ENCODE measurements at regions of chr3 and their contacts with region 1.

Region 1: GRCh38 chr3:187679638-187680396 is 9.6 kb upstream of the SST start:
- DNase-seq: peak; percentile 73
- ATAC-seq: peak; percentile 80
- H3K4me3 Mint-ChIP-seq: no peak overlapping the region
- H3K27ac Mint-ChIP-seq: no peak overlapping the region
- H3K4me1 Mint-ChIP-seq: peaks cover 2% of the 10 kb centered on the region
- H3K27me3 Mint-ChIP-seq: peaks cover 24% of the 10 kb centered on the region

Region 2: DNA sequence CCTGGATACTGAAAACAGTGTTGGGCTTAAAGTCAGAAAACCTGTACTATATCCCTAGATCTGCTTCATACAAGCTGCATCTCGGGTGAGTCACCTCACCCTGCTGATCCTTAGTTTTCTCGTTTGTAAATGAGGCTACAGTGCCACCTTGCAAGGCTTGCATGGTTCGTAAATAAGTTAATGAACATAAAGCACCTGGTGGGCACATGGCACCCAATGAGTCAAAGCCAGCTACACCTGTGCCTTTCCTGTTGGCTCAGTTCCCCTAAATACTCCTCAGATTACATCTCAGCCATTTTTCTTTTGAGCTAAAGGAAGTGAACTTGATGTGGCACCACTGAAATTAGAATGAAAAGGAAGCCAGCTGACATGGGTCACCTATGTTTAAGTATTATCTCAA is 456.0 kb before region 1 on chr3:
- CTCF ChIA-PET with region 1: interaction called, 22 read pairs
- POLR2A ChIA-PET with region 1: no interaction called
- DNase-seq: no peak
- ATAC-seq: no peak
- H3K4me3 Mint-ChIP-seq: no peak overlapping the region
- H3K27ac Mint-ChIP-seq: no peak overlapping the region
- H3K4me1 Mint-ChIP-seq: no peaks in the 10 kb centered on the region
- H3K27me3 Mint-ChIP-seq: peaks cover 6% of the 10 kb centered on the region

Region 3: DNA sequence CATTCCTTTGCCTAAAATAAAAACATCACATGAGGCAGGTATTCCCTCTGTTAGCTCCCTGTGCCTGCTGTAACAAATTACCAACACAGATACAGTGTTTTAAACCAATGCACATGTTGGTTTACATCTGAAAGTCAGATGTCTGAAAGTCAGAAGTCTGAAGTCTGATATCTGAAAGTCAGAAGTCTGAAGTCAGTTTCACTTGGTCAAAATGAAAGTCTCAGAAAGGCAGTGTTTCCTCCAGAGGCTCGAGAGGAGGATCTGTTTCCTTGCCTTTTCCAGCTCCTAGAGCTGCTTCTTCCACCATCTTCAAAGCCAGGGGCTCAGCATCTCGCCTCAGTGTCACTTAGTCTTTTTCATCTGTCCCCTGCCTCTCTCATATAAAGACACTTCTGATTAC is 31.6 kb before region 1 on chr3:
- CTCF ChIA-PET with region 1: interaction called, 10 read pairs
- POLR2A ChIA-PET with region 1: no interaction called
- DNase-seq: no peak
- ATAC-seq: no peak
- H3K4me3 Mint-ChIP-seq: no peak overlapping the region
- H3K27ac Mint-ChIP-seq: no peak overlapping the region
- H3K4me1 Mint-ChIP-seq: no peaks in the 10 kb centered on the region
- H3K27me3 Mint-ChIP-seq: peaks cover 33% of the 10 kb centered on the region

Region 4: DNA sequence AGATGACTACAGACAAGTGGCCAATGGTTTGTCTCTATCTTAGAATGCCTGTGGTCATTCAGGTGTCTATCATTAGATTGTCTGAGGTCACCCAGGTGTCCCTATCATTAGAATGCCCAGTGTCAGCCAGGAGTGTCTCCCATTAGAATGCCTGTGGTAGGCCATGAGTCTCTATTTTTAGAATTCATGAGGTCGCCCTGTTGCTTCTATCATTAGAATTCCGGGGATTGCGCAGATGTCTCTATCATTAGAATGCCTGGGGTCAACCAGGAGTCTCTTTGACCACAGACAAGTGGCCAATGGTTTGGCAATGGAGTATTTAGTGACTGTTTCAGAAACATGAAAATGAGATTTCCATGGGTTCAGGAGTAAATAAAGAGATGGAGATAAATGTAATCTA is 15.0 kb after region 1 on chr3:
- CTCF ChIA-PET with region 1: interaction called, 35 read pairs
- POLR2A ChIA-PET with region 1: no interaction called
- DNase-seq: no peak
- ATAC-seq: no peak
- H3K4me3 Mint-ChIP-seq: no peak overlapping the region
- H3K27ac Mint-ChIP-seq: no peak overlapping the region
- H3K4me1 Mint-ChIP-seq: no peaks in the 10 kb centered on the region
- H3K27me3 Mint-ChIP-seq: peaks cover 23% of the 10 kb centered on the region

Region 5: GRCh38 chr3:187714404-187714979 is 34.7 kb after region 1 on chr3:
- CTCF ChIA-PET with region 1: interaction called, 41 read pairs
- POLR2A ChIA-PET with region 1: no interaction called
- DNase-seq: peak; percentile 82
- ATAC-seq: peak; percentile 80
- H3K4me3 Mint-ChIP-seq: no peak overlapping the region
- H3K27ac Mint-ChIP-seq: no peak overlapping the region
- H3K4me1 Mint-ChIP-seq: peaks cover 13% of the 10 kb centered on the region
- H3K27me3 Mint-ChIP-seq: peaks cover 4% of the 10 kb centered on the region

Region 6: GRCh38 chr3:187777331-187777941 is 97.6 kb after region 1 on chr3:
- CTCF ChIA-PET with region 1: no interaction called
- POLR2A ChIA-PET with region 1: no interaction called
- DNase-seq: peak; percentile 80
- ATAC-seq: peak; percentile 91
- H3K4me3 Mint-ChIP-seq: peak overlapping the region; percentile 51
- H3K27ac Mint-ChIP-seq: peak overlapping the region; percentile 89
- H3K4me1 Mint-ChIP-seq: peaks cover 54% of the 10 kb centered on the region
- H3K27me3 Mint-ChIP-seq: no peaks in the 10 kb centered on the region

Measured in activated CD8-positive, alpha-beta T cell treated with anti-CD3 and anti-CD28 coated beads, Interleukin-2, amount 10 ng/mL, durations not matched to agents 7 days and 5 days (primary cell).